ENCODE measurements at regions of chr2 and their contacts with region 1.

Region 1: DNA sequence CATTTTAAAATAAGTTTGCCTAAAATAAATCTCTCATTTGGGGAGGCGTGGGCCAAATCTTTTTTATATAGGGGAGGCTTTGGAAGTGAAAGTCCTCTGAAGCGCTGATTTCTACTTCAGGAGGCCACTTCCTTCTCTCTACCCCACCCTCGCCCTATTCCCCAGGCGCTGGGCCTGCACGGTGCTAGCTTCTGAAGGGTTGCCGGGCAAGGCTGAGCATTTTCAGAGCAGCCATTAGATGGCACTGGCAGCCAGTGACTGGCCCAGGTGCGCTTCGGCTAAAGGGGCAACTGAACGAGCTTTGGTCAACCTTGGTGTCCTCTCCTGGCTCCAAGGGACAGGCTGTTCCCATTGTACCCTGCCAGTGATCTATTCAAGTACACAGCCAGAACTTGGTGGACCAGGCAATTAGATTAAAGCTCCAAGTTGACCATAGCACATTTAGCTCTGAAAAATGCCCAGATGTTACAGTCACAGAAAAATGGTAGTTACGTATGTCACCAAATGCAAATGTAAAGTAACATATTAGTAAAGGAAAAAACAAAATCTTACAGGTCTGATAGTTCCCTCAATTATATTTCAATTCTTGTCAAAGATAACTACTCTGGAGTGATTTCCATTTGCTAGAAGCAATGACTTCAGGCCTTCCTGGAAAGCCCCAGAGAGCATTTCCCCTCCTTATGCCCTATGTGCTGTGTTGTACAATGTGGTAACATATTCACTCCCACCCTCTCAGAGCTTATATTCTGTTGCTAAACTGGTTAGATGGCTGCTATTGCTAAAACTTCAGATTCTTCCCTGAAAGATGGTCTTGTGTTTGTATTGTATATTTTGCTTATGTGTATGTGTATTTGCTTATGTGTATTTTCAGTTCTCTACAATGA is 2.1 kb downstream of the POMC start:
- DNase-seq: peak; percentile 71
- ATAC-seq: peak; percentile 95
- H3K4me3 Mint-ChIP-seq: peak overlapping the region; percentile 38
- H3K27ac Mint-ChIP-seq: peak overlapping the region; percentile 65
- H3K4me1 Mint-ChIP-seq: peaks cover 33% of the 10 kb centered on the region
- H3K27me3 Mint-ChIP-seq: peaks cover 23% of the 10 kb centered on the region
- CTCF ChIP-seq: peak; percentile 20

Region 2: DNA sequence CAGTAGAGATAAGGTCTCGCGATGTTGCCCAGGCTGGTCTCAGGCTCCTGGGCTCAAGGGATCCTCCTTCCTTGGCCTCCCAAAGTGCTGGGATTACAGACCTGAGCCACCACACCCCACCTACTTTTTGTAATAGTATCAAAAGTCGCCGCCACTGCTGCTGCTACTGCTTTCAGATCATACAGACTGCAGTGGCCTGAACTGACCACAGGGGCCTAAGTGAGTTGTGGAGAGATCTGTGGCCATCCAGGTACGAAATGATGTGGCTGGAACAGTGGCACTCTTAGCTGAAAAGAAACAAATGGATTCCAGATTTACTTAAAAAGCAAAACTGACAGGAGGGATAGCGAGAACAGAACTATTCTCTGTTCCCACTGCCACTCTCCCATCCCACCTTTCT is 35.0 kb after region 1 on chr2:
- CTCF ChIA-PET with region 1: interaction called, 73 read pairs
- POLR2A ChIA-PET with region 1: interaction called, 5 read pairs
- intact Hi-C with region 1: loop called (anchors 1 kb)
- DNase-seq: no peak
- ATAC-seq: no peak
- H3K4me3 Mint-ChIP-seq: no peak overlapping the region
- H3K27ac Mint-ChIP-seq: no peak overlapping the region
- H3K4me1 Mint-ChIP-seq: peaks cover 24% of the 10 kb centered on the region
- H3K27me3 Mint-ChIP-seq: no peaks in the 10 kb centered on the region
- CTCF ChIP-seq: no peak

Region 3: DNA sequence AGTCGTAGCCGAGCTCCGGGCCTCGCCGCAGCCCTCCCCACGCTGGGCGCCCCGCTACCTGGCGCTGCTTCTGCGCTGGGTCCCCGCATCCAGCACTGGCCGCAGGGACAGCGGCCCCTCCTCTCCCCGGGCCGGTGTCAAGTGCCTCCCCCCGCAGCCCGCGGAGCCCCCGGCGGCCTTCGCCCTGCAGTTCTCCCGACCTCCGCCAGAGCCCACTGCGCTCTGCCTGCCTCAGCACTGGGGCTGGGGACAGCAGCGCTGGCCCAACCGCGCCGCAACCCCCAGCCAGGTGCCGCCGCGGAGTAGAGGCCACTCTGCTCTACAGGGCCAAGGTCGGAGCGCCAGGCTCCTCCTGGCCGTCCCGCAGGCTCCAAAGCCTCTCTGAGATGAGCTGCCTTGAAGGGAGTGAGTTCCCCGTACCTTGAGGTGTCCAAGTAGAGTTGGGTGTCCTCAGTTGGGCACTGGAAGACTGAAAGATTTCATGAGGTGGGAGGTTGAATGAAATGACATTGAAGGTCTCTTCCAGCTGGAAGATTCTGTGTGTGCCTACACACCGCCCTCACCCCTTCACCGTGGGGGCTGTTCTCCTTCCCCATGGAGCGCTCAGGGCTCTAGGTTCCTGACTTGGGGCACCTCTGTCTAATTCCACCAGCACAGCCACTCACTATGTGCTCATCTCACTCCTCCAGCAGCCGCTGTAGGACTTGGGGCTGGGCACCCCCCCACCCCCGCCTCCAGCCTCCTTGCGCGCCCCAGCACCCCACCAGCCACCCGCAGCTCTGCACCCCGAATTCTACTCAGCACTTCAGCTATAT is 176.3 kb after region 1 on chr2:
- CTCF ChIA-PET with region 1: interaction called, 4 read pairs
- POLR2A ChIA-PET with region 1: no interaction called
- intact Hi-C with region 1: loop called (anchors 5 kb)
- DNase-seq: peak; percentile 82
- ATAC-seq: peak; percentile 92
- H3K4me3 Mint-ChIP-seq: peak overlapping the region; percentile 84
- H3K27ac Mint-ChIP-seq: peak overlapping the region; percentile 59
- H3K4me1 Mint-ChIP-seq: peaks cover 19% of the 10 kb centered on the region
- H3K27me3 Mint-ChIP-seq: peaks cover 1% of the 10 kb centered on the region
- CTCF ChIP-seq: peak; percentile 74

Region 4: GRCh38 chr2:25521665-25522387 is 355.6 kb after region 1 on chr2:
- CTCF ChIA-PET with region 1: interaction called, 6 read pairs
- POLR2A ChIA-PET with region 1: no interaction called
- intact Hi-C with region 1: loop called (anchors 1 kb)
- DNase-seq: no peak
- ATAC-seq: peak; percentile 97
- H3K4me3 Mint-ChIP-seq: peak overlapping the region; percentile 7
- H3K27ac Mint-ChIP-seq: peak overlapping the region; percentile 38
- H3K4me1 Mint-ChIP-seq: peaks cover 23% of the 10 kb centered on the region
- H3K27me3 Mint-ChIP-seq: no peaks in the 10 kb centered on the region
- CTCF ChIP-seq: no peak

Region 5: GRCh38 chr2:25567406-25567805 is 401.2 kb after region 1 on chr2:
- CTCF ChIA-PET with region 1: interaction called, 23 read pairs
- POLR2A ChIA-PET with region 1: interaction called, 4 read pairs
- intact Hi-C with region 1: loop called (anchors 1 kb)
- DNase-seq: no peak
- ATAC-seq: peak; percentile 53
- H3K4me3 Mint-ChIP-seq: no peak overlapping the region
- H3K27ac Mint-ChIP-seq: no peak overlapping the region
- H3K4me1 Mint-ChIP-seq: peaks cover 27% of the 10 kb centered on the region
- H3K27me3 Mint-ChIP-seq: no peaks in the 10 kb centered on the region
- CTCF ChIP-seq: no peak